T-cell (primary cell): ENCODE measurements at regions of chr7 and their contacts with region 1.

Region 1: DNA sequence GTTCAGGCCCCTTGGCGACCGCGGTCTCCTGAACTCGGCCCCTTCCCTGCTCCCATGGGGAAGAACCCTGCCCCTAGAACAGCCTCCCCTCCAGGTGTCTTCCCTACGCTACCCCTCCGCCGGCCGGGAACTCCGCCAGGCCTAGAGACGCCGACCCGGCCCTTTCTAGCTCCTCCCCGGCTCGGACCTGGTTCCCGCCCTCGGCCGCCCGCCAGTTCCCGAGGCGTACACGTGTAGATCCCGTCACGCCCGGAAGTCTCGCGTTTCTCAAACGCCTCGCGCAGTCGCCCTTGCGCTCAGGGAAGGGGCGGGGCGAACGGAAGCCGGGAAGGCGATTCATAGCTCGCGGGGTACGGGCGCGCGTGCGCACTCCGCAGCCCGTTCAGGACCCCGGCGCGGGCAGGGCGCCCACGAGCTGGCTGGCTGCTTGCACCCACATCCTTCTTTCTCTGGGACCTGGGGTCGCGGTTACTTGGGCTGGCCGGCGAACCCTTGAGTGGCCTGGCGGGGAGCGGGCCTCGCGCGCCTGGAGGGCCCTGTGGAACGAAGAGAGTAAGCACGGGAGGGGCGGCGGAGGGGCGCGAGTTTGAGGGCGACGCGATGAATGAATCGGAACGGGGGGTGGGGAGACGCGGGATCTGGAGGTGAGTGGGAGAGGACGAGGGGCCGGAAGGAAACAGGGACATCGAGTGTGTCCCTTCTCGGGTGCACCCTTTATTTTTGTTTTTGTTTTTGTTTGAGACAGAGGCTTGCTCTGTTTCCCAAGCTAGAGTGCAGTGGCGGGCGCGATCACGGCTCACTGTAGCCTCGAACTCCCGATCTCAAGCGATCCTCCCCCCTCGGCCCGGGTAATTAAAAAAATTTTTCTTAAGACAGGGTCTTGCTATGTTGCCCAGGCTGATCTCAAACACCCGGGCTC is at the start of gene POP7:
- DNase-seq: peak; percentile 93 to 99 (median 97)
- ATAC-seq: peak; percentile 96 to 98 (median 96)
- H3K4me3 ChIP-seq: peak within 1 kb of the TSS; percentile 87 to 100
- H3K4me3 Mint-ChIP-seq: peak within 1 kb of the TSS; percentile 88 to 95 (median 92)
- H3K27ac ChIP-seq: peak within 1 kb of the TSS; percentile 83
- H3K27ac Mint-ChIP-seq: peak within 1 kb of the TSS; percentile 90 to 94
- H3K4me1 ChIP-seq: peaks cover 5 to 25% of the 10 kb centered on the region in 2 experiments
- H3K4me1 Mint-ChIP-seq: peaks cover 14 to 19% (median 19%) of the 10 kb centered on the region in 3 donors
- H3K27me3 ChIP-seq: peaks cover 0 to 1% of the 10 kb centered on the region in 2 experiments
- H3K27me3 Mint-ChIP-seq: no peaks in the 10 kb centered on the region
- total RNA-seq, gene POP7: 8.3 to 18.1 (median 17.8) TPM

Region 2: DNA sequence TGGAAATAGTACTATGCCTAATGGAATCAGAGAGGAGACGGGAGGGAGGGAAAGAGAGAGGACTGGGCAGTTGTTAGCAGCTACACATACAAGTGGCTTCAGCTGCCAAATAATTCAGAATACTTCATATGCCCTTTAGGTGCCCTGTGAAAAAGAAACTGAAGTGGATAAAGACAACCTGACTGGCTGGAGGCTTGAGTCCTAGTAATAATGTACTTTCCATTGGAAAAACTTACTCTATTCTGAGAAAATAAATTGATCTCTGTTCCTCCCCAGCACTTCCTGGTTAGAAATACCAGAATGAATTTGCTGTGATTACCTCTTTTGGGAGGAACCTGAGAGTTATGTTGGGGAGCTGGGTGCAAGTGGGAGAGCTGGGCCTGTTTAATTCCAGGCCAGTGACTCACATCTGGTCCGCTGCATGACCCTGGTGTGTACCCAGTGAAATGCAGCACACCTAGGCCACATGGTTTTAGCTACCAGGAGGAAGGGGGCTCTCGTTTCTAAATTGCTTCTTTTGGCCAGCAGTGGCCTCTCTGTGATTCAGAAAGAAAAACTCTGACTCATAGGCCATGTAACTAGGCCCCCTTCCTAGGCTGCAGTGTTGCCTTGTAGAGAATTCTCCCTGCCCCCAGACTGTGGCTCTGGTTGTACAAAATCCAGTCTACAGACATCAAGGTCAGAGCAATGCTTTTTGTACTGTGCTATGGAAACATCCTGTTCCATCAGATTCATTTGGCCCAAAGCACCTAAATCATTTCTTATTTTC is 160.5 kb before region 1 on chr7:
- CTCF ChIA-PET with region 1: interaction called in 1 of 2 experiments, 3 read pairs
- POLR2A ChIA-PET with region 1: interaction called in 1 of 2 experiments, 11 read pairs
- DNase-seq: peak in 7 of 35 experiments; percentile 21 to 55 (median 37)
- ATAC-seq: peak; percentile 51 to 71 (median 69)
- H3K4me3 ChIP-seq: peak overlapping the region in 1 of 2 donors; percentile 19
- H3K4me3 Mint-ChIP-seq: peak overlapping the region; percentile 76 to 99 (median 99)
- H3K27ac ChIP-seq: peak overlapping the region; percentile 76
- H3K27ac Mint-ChIP-seq: peak overlapping the region; percentile 98
- H3K4me1 ChIP-seq: peaks cover 46 to 98% of the 10 kb centered on the region in 2 experiments
- H3K4me1 Mint-ChIP-seq: peaks cover 91 to 97% (median 94%) of the 10 kb centered on the region in 3 donors
- H3K27me3 ChIP-seq: no peaks in the 10 kb centered on the region
- H3K27me3 Mint-ChIP-seq: no peaks in the 10 kb centered on the region

Region 3: GRCh38 chr7:100611974-100612729 is 93.9 kb before region 1 on chr7 and contains the start of gene MOSPD3:
- CTCF ChIA-PET with region 1: interaction called in 1 of 2 experiments, 13 read pairs
- POLR2A ChIA-PET with region 1: interaction called, 3 to 4 read pairs
- DNase-seq: peak; percentile 95 to 100 (median 97)
- ATAC-seq: peak; percentile 89 to 96 (median 94)
- H3K4me3 ChIP-seq: peak within 1 kb of the TSS; percentile 85 to 86
- H3K4me3 Mint-ChIP-seq: peak within 1 kb of the TSS; percentile 94 to 98 (median 97)
- H3K27ac ChIP-seq: peak within 1 kb of the TSS; percentile 93
- H3K27ac Mint-ChIP-seq: peak within 1 kb of the TSS; percentile 100
- H3K4me1 ChIP-seq: peaks cover 7 to 30% of the 10 kb centered on the region in 2 experiments
- H3K4me1 Mint-ChIP-seq: peaks cover 16 to 30% (median 23%) of the 10 kb centered on the region in 3 donors
- H3K27me3 ChIP-seq: no peaks in the 10 kb centered on the region
- H3K27me3 Mint-ChIP-seq: no peaks in the 10 kb centered on the region
- total RNA-seq, gene MOSPD3: 10.9 to 19.0 (median 16.3) TPM

Region 4: DNA sequence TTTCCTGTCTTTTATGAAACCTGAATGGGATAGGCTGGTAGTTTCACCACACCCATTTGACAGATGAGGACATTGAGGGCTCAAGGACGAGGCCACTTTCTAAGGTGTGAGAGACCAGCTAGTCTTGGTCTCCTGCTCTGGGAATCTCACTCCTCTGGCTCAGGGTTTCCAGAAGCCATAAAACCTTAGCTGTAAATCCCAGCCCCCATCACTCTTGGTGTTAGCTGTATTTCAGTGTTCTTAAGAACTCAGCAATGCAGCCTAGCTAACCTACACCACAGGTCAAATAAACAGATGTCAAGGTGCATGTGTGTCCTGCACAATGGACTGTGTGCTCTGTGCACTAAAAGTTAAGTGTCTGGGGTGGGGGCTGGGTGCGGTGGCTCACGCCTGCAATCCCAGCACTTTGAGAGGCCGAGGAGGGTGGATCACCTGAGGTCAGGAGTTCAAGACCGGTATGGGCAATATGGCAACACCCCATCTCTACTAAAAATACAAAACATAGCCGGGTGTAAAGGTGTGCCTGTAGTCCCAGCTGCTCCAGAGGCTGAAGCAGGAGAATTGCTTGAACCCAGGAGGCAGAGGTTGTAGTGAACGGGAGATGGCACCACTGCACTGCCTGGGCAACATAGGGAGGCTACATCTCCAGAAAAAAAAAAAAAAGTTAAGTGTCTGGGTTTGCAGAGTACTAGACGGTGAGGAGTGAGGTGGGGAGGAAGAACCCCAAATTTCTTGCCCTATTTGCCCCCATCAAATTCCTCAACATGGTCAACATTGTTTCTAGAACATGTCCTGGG is 13.7 kb after region 1 on chr7:
- CTCF ChIA-PET with region 1: interaction called in 1 of 2 experiments, 12 read pairs
- POLR2A ChIA-PET with region 1: no interaction called
- DNase-seq: no peak
- ATAC-seq: no peak
- H3K4me3 ChIP-seq: no peak overlapping the region
- H3K4me3 Mint-ChIP-seq: no peak overlapping the region
- H3K27ac ChIP-seq: no peak overlapping the region
- H3K27ac Mint-ChIP-seq: no peak overlapping the region
- H3K4me1 ChIP-seq: peaks cover 0 to 4% of the 10 kb centered on the region in 2 experiments
- H3K4me1 Mint-ChIP-seq: peaks cover 0 to 2% (median 2%) of the 10 kb centered on the region in 3 donors
- H3K27me3 ChIP-seq: peaks cover 2 to 68% of the 10 kb centered on the region in 2 experiments
- H3K27me3 Mint-ChIP-seq: peaks cover 41 to 43% of the 10 kb centered on the region in 2 donors

Region 5: DNA sequence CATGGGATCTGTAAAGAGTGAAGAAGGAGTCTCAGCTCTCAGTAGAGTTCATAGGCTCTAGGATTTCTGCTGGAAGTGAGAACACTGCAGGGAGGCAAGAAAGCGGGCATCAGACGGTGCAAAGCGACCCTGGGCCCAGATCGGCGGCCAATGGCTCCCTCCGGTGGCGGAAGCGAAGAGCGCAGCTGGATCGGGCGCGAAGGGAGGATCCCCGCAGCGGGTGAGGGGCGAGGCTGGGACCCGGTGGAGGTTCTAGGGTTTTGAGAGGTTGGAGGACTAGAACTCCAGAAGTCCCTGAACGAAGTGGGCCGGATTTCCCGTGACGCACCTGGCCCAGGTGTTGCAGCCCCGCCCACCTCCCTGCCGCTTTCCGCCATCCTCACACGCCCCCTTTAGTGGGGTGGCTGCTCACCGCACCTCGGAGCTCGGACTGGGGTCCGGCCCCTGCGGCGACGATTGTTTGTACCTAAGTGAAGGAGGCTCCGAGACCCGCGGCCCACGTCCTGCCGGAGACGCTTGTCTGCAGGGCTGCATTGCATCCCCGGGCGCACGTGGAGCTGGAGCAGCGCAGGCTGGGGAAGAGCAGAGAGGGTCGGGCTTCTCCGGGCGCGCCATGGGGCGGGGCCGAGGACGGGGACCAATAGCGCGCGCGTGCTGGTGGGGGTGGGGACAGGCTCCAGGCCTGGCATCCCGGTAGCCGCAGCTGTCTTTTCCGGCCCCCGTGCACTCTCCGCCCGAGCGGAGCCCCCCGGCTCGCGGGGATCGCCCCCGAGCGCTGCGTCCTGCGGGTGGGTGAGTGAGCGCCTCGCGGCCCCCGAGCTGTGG is 146.2 kb after region 1 on chr7 and contains the start of gene SLC12A9:
- CTCF ChIA-PET with region 1: interaction called, 9 to 23 read pairs
- POLR2A ChIA-PET with region 1: interaction called in 1 of 2 experiments, 3 read pairs
- DNase-seq: peak; percentile 66 to 89 (median 77)
- ATAC-seq: peak; percentile 93 to 97 (median 96)
- H3K4me3 ChIP-seq: peak within 1 kb of the TSS; percentile 66 to 68
- H3K4me3 Mint-ChIP-seq: peak within 1 kb of the TSS; percentile 86 to 90 (median 89)
- H3K27ac ChIP-seq: peak within 1 kb of the TSS; percentile 70
- H3K27ac Mint-ChIP-seq: peak within 1 kb of the TSS; percentile 84 to 88
- H3K4me1 ChIP-seq: peaks cover 3 to 26% of the 10 kb centered on the region in 2 experiments
- H3K4me1 Mint-ChIP-seq: peaks cover 11 to 32% (median 19%) of the 10 kb centered on the region in 3 donors
- H3K27me3 ChIP-seq: no peaks in the 10 kb centered on the region
- H3K27me3 Mint-ChIP-seq: no peaks in the 10 kb centered on the region
- total RNA-seq, gene SLC12A9: 49.9 to 72.6 (median 70.2) TPM